CD4-positive, alpha-beta memory T cell (primary cell): ENCODE measurements at regions of chr17 and their contacts with region 1.

Region 1: GRCh38 chr17:4565209-4566141 is 5.1 kb upstream of the GGT6 start:
- DNase-seq: peak; percentile 49 to 59 (median 56)
- H3K4me3 ChIP-seq: no peak overlapping the region
- H3K4me3 Mint-ChIP-seq: peak overlapping the region in 7 of 8 donors; percentile 54 to 81 (median 74)
- H3K27ac ChIP-seq: no peak overlapping the region
- H3K27ac Mint-ChIP-seq: peak overlapping the region; percentile 8 to 77 (median 27)
- H3K4me1 ChIP-seq: peaks cover 23% of the 10 kb centered on the region
- H3K4me1 Mint-ChIP-seq: peaks cover 27 to 47% (median 35%) of the 10 kb centered on the region in 4 donors
- H3K27me3 ChIP-seq: no peaks in the 10 kb centered on the region
- H3K27me3 Mint-ChIP-seq: peaks cover 0 to 1% of the 10 kb centered on the region in 2 donors

Region 2: GRCh38 chr17:4420692-4421131 is 144.8 kb before region 1 on chr17:
- CTCF ChIA-PET with region 1: interaction called, 7 read pairs
- POLR2A ChIA-PET with region 1: no interaction called
- intact Hi-C with region 1: loop called (anchors 2 kb)
- DNase-seq: peak; percentile 51 to 67 (median 64)
- H3K4me3 ChIP-seq: no peak overlapping the region
- H3K4me3 Mint-ChIP-seq: no peak overlapping the region
- H3K27ac ChIP-seq: no peak overlapping the region
- H3K27ac Mint-ChIP-seq: peak overlapping the region in 1 of 7 donors; percentile 15
- H3K4me1 ChIP-seq: no peaks in the 10 kb centered on the region
- H3K4me1 Mint-ChIP-seq: peaks cover 0 to 4% (median 2%) of the 10 kb centered on the region in 4 donors
- H3K27me3 ChIP-seq: no peaks in the 10 kb centered on the region
- H3K27me3 Mint-ChIP-seq: no peaks in the 10 kb centered on the region

Region 3: DNA sequence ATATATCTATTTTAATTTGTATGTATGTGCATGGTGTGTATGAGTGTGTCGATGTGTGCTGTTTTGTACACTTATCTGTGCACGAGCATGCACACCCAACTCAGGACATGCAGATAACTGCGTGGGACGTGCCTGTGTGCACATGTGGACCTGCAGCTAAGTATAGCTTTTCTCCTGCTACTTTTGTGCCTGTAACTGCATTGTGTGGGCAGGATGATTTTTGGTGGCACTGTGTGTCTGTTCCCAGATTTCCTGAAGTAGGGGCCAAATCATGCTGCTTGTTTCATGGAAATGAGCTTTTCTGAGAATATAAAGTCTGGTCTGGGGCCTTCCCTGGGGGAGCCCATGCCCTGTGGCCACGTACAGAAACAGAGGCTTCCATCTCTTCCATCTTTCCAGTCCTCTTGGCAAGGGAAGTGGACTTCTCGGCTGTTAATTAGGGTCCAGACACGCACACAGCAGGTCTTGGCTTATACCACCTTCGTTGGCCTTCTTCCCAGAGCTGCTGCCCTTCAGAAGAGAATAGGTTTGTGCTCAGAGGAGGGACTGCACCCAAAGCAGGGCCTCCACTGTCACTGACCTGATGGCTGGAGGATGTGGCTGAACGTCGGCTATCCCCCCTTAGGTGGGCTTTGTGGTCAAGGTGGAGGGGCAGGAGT is 101.5 kb before region 1 on chr17:
- CTCF ChIA-PET with region 1: no interaction called
- POLR2A ChIA-PET with region 1: no interaction called
- intact Hi-C with region 1: no loop called
- DNase-seq: no peak
- H3K4me3 ChIP-seq: no peak overlapping the region
- H3K4me3 Mint-ChIP-seq: no peak overlapping the region
- H3K27ac ChIP-seq: no peak overlapping the region
- H3K27ac Mint-ChIP-seq: no peak overlapping the region
- H3K4me1 ChIP-seq: no peaks in the 10 kb centered on the region
- H3K4me1 Mint-ChIP-seq: peaks cover 0 to 1% (median 0%) of the 10 kb centered on the region in 4 donors
- H3K27me3 ChIP-seq: no peaks in the 10 kb centered on the region
- H3K27me3 Mint-ChIP-seq: peaks cover 0 to 3% of the 10 kb centered on the region in 2 donors

Region 4: DNA sequence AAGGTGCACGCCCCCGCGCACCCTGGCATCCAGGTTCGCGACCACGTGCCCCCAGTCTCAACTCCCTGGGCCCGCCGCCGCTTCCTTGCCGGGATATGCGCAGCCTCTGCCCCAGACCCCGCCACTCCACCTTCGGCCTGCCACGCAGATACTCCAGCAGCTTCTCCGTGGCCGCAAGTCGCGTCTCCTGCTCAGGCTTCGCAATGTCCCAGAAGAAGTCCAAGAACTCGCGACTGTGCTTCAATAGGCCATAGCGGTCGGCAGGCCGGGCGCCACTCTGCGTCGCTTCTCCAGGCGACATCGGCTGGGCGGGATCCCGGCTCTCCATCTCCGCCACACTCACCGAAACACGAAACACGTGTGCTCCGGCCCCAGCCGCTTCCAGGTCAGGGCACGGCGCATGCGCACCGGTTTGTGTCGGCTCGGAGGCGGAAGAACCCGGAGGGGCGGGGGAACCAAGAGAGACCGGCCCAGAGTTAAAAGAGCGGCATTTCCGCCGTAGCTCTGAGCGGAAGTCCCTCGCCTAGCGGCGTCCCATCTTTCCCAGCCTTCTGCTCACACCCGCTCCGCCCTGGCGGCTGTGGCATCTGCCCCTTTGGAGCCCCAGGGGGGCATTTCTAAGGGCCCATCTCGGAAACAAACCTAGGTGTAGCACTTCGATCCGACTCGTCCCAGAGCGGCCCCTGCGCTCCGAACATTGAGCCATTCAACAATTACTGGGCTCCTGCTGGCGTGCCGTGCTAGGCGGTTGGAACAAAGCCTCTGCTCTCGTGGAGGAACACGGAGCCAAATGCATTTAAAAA is 10.3 kb before region 1 on chr17 and contains the start of gene MYBBP1A:
- CTCF ChIA-PET with region 1: interaction called, 26 read pairs
- POLR2A ChIA-PET with region 1: interaction called, 5 read pairs
- intact Hi-C with region 1: loop called (anchors 1 kb)
- DNase-seq: peak; percentile 95
- H3K4me3 ChIP-seq: peak within 1 kb of the TSS; percentile 62 to 98
- H3K4me3 Mint-ChIP-seq: peak within 1 kb of the TSS; percentile 93 to 97 (median 96)
- H3K27ac ChIP-seq: peak within 1 kb of the TSS; percentile 74
- H3K27ac Mint-ChIP-seq: peak within 1 kb of the TSS; percentile 90 to 99 (median 97)
- H3K4me1 ChIP-seq: peaks cover 24% of the 10 kb centered on the region
- H3K4me1 Mint-ChIP-seq: peaks cover 16 to 32% (median 24%) of the 10 kb centered on the region in 4 donors
- H3K27me3 ChIP-seq: no peaks in the 10 kb centered on the region
- H3K27me3 Mint-ChIP-seq: no peaks in the 10 kb centered on the region
- total RNA-seq, gene MYBBP1A: 73.4 to 74.7 TPM

Region 5: GRCh38 chr17:4625181-4625617 is 59.7 kb after region 1 on chr17:
- CTCF ChIA-PET with region 1: interaction called, 21 read pairs
- POLR2A ChIA-PET with region 1: no interaction called
- intact Hi-C with region 1: no loop called
- DNase-seq: no peak
- H3K4me3 ChIP-seq: no peak overlapping the region
- H3K4me3 Mint-ChIP-seq: no peak overlapping the region
- H3K27ac ChIP-seq: no peak overlapping the region
- H3K27ac Mint-ChIP-seq: no peak overlapping the region
- H3K4me1 ChIP-seq: no peaks in the 10 kb centered on the region
- H3K4me1 Mint-ChIP-seq: no peaks in the 10 kb centered on the region
- H3K27me3 ChIP-seq: no peaks in the 10 kb centered on the region
- H3K27me3 Mint-ChIP-seq: peaks cover 3 to 8% of the 10 kb centered on the region in 2 donors

Region 6: GRCh38 chr17:4891411-4892342 is 326.2 kb after region 1 on chr17:
- CTCF ChIA-PET with region 1: interaction called, 3 read pairs
- POLR2A ChIA-PET with region 1: no interaction called
- intact Hi-C with region 1: loop called (anchors 1 kb)
- DNase-seq: no peak
- H3K4me3 ChIP-seq: no peak overlapping the region
- H3K4me3 Mint-ChIP-seq: no peak overlapping the region
- H3K27ac ChIP-seq: no peak overlapping the region
- H3K27ac Mint-ChIP-seq: no peak overlapping the region
- H3K4me1 ChIP-seq: no peaks in the 10 kb centered on the region
- H3K4me1 Mint-ChIP-seq: peaks cover 0 to 6% (median 2%) of the 10 kb centered on the region in 4 donors
- H3K27me3 ChIP-seq: no peaks in the 10 kb centered on the region
- H3K27me3 Mint-ChIP-seq: no peaks in the 10 kb centered on the region